PC-9 (cell line): ENCODE measurements at regions of chr2 and their contacts with region 1.

Region 1: GRCh38 chr2:113198790-113199612 is 25.2 kb downstream of the PSD4 start:
- DNase-seq: peak; percentile 72 to 93
- H3K4me3 ChIP-seq: peak overlapping the region; percentile 67
- H3K27ac ChIP-seq: peak overlapping the region; percentile 78
- H3K4me1 ChIP-seq: peaks cover 6% of the 10 kb centered on the region; the same call in 1 of the 2 replicates
- H3K27me3 ChIP-seq: no peaks in the 10 kb centered on the region
- CTCF ChIP-seq: peak; percentile 83

Region 2: GRCh38 chr2:112784199-112785189 is 414.5 kb before region 1 on chr2 and contains the start of gene IL1A:
- CTCF ChIA-PET with region 1: no interaction called
- POLR2A ChIA-PET with region 1: no interaction called
- intact Hi-C with region 1: no loop called
- DNase-seq: peak; percentile 37 to 65
- H3K4me3 ChIP-seq: peak within 1 kb of the TSS; percentile 21; the same call in 1 of the 2 replicates
- H3K27ac ChIP-seq: peak within 1 kb of the TSS; percentile 44
- H3K4me1 ChIP-seq: peaks cover 36% of the 10 kb centered on the region
- H3K27me3 ChIP-seq: no peaks in the 10 kb centered on the region
- CTCF ChIP-seq: no peak
- total RNA-seq, gene IL1A: 0.55 TPM in 2 replicates

Region 3: DNA sequence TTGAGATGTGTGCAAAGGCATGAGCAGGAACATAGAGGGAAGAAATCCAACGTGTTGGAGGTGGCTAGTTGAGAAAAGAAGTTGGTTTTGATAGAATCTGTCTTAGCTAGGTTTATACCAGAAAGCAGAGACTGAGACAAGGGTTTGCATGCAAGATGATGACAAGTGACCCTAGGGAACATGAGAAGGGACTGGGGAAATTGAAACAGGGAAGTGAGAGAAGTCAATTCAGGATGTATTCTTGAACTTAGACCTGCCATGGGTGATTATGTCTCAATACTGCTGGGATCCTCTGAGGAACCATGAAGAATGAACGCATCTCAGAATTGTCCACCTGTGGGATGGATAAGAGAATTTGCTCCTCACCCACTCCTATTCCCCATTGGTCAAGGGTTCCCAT is 173.3 kb before region 1 on chr2:
- CTCF ChIA-PET with region 1: no interaction called
- POLR2A ChIA-PET with region 1: no interaction called
- intact Hi-C with region 1: no loop called
- DNase-seq: no peak
- H3K4me3 ChIP-seq: no peak overlapping the region
- H3K27ac ChIP-seq: no peak overlapping the region
- H3K4me1 ChIP-seq: no peaks in the 10 kb centered on the region
- H3K27me3 ChIP-seq: no peaks in the 10 kb centered on the region
- CTCF ChIP-seq: no peak

Region 4: GRCh38 chr2:113114224-113114945 is 84.6 kb before region 1 on chr2:
- CTCF ChIA-PET with region 1: interaction called, 13 read pairs
- POLR2A ChIA-PET with region 1: no interaction called
- intact Hi-C with region 1: no loop called
- DNase-seq: no peak
- H3K4me3 ChIP-seq: no peak overlapping the region
- H3K27ac ChIP-seq: no peak overlapping the region
- H3K4me1 ChIP-seq: peaks cover 37% of the 10 kb centered on the region
- H3K27me3 ChIP-seq: no peaks in the 10 kb centered on the region
- CTCF ChIP-seq: no peak

Region 5: GRCh38 chr2:113298176-113298575 is 99.2 kb after region 1 on chr2:
- CTCF ChIA-PET with region 1: interaction called, 12 read pairs
- POLR2A ChIA-PET with region 1: no interaction called
- intact Hi-C with region 1: no loop called
- DNase-seq: no peak
- H3K4me3 ChIP-seq: no peak overlapping the region
- H3K27ac ChIP-seq: no peak overlapping the region
- H3K4me1 ChIP-seq: 0 out of 2 replicates have a peak, but pooled peaks cover 7% of the 10 kb centered on the region
- H3K27me3 ChIP-seq: no peaks in the 10 kb centered on the region
- CTCF ChIP-seq: no peak